ENCODE measurements at regions of chr2 and their contacts with region 1.

Region 1: DNA sequence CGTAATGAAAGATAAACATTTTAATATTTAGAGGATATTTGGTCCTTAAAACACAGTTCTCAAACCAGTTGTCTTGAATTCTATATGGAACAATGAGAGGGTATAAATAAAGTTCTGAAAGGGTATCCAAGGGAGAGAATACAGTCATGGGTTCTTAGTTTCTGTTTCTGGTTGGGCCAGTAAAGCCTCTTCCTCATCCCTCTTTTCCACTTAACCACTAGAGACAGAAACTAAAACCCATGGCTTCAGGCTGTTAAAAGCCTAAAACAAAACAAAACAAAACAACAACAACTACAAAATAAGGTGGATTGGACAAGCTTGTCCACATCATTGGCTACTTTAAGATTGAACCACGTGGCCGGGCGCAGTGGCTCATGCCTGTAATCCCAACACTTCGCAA is 18.8 kb downstream of the COQ10B start:
- DNase-seq: no peak
- ATAC-seq: no peak
- H3K4me3 ChIP-seq: no peak overlapping the region
- H3K27ac ChIP-seq: no peak overlapping the region
- H3K4me1 ChIP-seq: no peaks in the 10 kb centered on the region
- H3K27me3 ChIP-seq: no peaks in the 10 kb centered on the region
- CTCF ChIP-seq: no peak

Region 2: DNA sequence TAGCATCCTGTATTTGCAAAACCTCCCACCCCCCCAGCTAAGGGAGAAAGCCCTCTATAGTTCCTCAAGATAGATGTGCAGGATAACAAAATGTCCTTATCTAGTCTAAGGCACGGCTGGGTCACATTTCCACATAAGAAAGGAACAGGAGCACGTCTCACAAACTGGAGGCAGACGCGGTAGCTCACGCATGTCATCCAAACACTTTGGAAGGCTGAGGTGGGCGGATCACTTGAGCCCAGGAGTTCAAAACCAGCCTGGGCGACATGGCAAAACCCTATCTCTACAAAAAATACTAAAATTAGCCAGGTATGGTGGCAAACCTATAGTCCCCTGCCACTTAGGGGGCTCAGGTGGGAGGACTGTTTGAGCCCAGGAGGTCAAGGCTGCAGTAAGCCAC is 46.6 kb before region 1 on chr2:
- intact Hi-C with region 1: loop called in 1 of 2 experiments (anchors 5 kb)
- DNase-seq: no peak
- ATAC-seq: peak in 1 of 4 donors; percentile 32
- H3K4me3 ChIP-seq: no peak overlapping the region
- H3K27ac ChIP-seq: no peak overlapping the region
- H3K4me1 ChIP-seq: peaks cover 58% of the 10 kb centered on the region
- H3K27me3 ChIP-seq: no peaks in the 10 kb centered on the region
- CTCF ChIP-seq: no peak